ENCODE measurements at regions of chr16 and their contacts with region 1.

Region 1: DNA sequence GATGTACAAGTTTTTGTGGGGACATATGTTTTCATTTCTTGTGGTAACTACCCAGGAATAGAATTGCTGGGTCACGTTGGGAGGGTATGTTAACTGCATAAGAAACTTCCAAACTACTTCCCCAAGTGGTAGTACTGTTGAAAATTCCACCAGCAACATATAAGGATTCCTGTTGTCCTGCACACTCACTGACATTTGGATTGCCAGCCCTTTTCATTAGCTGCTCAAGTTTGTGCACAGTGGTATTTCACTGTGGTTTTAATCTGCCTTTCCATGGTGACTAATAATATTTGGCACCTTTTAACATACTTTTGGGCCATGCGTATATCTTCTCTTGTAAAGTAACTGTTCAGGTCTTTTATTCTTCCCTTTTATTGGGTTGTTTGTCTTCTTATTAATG is 103.3 kb downstream of the GNAO1 start:
- DNase-seq: peak; percentile 81
- H3K4me3 ChIP-seq: no peak overlapping the region
- CTCF ChIP-seq: no peak

Region 2: DNA sequence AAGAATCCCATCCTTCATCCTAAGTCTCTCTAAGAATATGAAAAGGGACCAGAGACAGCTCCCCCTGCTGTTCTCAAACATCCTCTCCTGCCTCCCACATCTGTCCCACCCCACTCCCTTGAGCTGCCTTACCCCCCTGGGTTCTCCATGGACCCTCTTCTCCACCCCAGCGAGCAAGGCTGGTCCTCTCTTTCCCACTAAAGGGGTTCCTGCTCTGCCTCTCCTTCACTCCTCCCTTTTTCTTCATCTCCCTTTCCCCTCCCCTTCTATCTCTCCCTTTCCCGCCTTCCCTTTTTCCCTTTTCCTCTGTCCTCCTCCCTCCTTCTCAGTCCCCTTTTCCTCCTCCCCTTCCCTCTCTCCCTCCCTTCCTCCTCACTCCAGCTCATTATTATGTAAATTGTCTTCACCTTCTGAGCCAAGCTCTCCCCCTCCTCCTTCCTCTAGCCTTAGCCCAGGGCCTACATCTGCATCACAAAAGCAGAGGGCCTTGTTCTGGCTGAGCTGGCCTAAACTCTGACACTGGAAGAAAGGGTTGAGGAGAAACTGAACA is 13.2 kb before region 1 on chr16:
- CTCF ChIA-PET with region 1: interaction called, 34 read pairs
- POLR2A ChIA-PET with region 1: no interaction called
- DNase-seq: no peak
- H3K4me3 ChIP-seq: no peak overlapping the region
- CTCF ChIP-seq: peak; percentile 39

Measured in AG04449 (cell line).